Activated CD4-positive, alpha-beta memory T cell treated with anti-CD3 and anti-CD28 coated beads, Interleukin-2, amount 10 ng/mL, durations not matched to agents 7 days and 5 days (primary cell): ENCODE measurements at regions of chr4 and their contacts with region 1.

Region 1: DNA sequence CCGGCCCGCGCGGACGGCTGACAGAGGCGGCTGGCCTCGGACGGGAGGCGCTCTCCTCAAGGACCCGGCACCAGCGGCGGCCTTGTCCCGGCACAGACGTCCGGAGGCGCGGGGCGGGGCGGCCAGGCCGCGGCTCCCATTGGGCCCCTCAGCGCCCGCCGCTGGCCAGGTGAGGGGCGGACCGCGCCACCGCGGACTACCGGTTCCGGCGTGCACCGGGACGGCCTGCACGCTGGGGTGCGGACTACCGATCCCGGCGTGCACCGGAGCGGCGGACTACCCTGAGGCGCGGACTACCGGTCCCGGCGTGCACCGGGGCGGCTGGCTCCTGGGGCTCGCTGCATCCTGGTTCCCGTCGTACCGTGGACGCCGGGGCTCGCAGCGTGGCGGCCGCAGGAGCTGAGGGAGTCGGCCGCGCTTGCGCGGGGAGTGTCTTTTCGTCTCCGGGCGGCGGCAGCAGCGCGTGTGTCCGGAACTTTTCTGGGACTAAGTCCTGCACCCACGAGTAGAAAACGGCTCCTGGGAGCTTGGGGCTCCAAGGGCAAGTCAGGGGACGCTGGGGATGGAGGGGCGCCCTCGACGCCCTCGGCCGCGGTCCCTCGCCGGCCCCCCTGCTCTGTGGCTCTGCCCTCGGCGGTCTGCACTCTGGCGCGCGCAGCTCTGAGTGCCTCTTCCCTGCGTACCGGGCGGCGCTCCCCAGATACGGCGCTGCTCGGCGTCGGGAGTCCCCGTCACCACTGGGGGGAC is at the start of gene LETM1:
- DNase-seq: peak; percentile 96
- H3K4me3 Mint-ChIP-seq: peak within 1 kb of the TSS; percentile 81
- H3K27ac Mint-ChIP-seq: peak within 1 kb of the TSS; percentile 66
- H3K4me1 Mint-ChIP-seq: peaks cover 37% of the 10 kb centered on the region
- H3K27me3 Mint-ChIP-seq: no peaks in the 10 kb centered on the region
- total RNA-seq, gene LETM1: 36.6 to 39.3 TPM

Region 2: DNA sequence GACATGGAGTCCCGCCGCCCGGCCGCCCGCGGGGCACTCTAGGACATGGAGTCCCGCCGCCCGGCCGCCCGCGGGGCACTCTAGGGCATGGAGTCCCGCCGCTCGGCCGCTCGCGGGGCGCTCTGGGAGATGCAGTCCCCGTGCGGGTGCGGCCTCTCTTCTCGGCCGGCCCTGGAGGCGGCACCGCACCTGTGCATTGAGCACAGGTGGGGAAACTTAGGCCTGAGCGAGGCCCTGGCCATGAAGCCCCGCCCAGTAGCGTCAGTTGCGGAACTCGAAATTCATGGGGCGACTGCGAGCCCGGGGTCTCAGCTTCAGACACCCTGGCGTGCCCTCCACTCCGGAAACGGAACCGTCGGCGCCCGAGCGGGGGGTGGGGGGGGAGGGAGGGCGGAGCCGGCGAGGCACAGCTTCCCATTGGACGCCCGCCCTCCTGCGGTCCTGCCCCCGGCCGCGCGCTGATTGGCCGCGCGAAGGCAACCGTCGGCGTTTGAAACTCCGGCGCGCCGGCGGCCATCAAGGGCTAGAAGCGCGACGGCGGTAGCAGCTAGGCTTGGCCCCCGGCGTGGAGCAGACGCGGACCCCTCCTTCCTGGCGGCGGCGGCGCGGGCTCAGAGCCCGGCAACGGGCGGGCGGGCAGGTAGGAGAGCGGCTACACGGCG is 135.1 kb before region 1 on chr4 and contains the starts of genes TACC3 and TMEM129:
- CTCF ChIA-PET with region 1: no interaction called
- POLR2A ChIA-PET with region 1: interaction called, 14 read pairs
- DNase-seq: peak; percentile 96
- H3K4me3 Mint-ChIP-seq: peak within 1 kb of the TSS; percentile 98
- H3K27ac Mint-ChIP-seq: peak within 1 kb of the TSS; percentile 99
- H3K4me1 Mint-ChIP-seq: peaks cover 58% of the 10 kb centered on the region
- H3K27me3 Mint-ChIP-seq: no peaks in the 10 kb centered on the region
- total RNA-seq, gene TACC3: 213 TPM
- total RNA-seq, gene TMEM129: 20.4 to 22.3 TPM

Region 3: DNA sequence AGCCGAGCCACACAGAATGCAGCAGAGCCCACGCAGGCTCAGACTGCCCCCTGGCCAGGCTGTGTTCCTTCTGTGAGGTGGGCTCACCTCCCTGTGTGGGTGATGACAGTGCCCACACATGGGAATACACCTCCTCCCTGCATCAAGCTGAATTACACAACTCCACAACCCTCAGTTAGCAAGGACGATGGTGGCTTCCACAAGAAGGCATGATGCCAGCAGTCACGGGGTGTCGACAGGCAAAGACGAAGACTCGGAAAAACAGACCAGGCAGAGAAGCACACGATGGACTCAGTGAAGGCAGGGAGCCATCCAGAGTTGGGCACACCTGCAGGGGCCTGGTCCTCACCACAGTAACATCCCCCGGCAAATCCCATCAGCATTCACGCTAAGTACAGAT is 12.4 kb before region 1 on chr4:
- CTCF ChIA-PET with region 1: no interaction called
- POLR2A ChIA-PET with region 1: interaction called, 11 read pairs
- DNase-seq: no peak
- H3K4me3 Mint-ChIP-seq: no peak overlapping the region
- H3K27ac Mint-ChIP-seq: no peak overlapping the region
- H3K4me1 Mint-ChIP-seq: peaks cover 7% of the 10 kb centered on the region
- H3K27me3 Mint-ChIP-seq: no peaks in the 10 kb centered on the region

Region 4: DNA sequence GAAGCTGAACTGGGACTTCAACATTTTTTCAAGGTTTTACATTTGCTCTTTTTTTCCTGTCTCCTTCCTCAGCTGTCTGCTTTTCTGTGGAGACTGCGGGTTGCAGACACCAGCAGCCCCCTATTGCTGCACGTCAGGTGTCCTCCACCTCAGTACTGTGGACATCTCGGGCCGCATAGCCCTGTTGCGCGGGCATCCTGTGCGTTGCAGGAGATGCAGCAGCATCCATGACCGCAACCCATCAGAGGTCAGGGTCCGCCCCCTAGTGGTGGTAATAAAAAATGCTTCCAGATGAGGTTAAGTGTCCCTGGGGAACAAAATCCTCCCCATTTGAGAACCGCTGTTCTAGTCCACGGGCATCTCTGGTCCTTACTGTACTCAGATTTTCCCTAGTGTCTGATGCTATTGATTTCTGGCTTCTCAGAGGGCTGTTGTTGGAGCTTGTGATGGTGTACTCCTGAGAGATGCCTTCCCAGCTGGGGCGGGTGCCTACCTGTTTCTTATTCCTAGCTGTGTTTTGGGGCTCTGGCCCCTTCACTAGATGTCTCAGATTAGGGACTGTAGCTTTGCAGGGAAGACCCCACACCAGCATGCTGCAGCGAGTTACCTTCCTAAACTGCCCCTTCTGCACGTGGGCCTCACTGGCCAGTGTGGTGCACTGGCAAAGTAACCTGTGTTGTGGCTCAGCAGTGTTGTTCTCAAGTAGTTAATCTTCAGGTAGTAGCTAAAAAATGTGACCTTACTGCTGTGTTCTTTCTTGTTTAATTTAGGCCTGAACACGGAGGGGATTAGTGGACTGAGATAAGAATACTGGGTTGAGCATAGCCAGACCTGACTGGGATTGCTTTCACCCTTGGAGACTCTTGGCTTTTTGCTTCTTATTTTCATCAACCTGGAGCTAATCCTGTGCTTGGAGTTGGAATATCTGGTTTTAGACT is 43.2 kb after region 1 on chr4:
- CTCF ChIA-PET with region 1: interaction called, 12 read pairs
- POLR2A ChIA-PET with region 1: interaction called, 4 read pairs
- DNase-seq: peak; percentile 79
- H3K4me3 Mint-ChIP-seq: no peak overlapping the region
- H3K27ac Mint-ChIP-seq: peak overlapping the region; percentile 86
- H3K4me1 Mint-ChIP-seq: peaks cover 74% of the 10 kb centered on the region
- H3K27me3 Mint-ChIP-seq: no peaks in the 10 kb centered on the region